ENCODE measurements at regions of chr2 and their contacts with region 1.

Region 1: GRCh38 chr2:48356701-48357325 is 173.1 kb upstream of the STON1 start:
- DNase-seq: peak; percentile 25
- H3K4me3 Mint-ChIP-seq: peak overlapping the region; percentile 74
- H3K27ac Mint-ChIP-seq: peak overlapping the region; percentile 98
- H3K4me1 Mint-ChIP-seq: peaks cover 53% of the 10 kb centered on the region
- H3K27me3 Mint-ChIP-seq: no peaks in the 10 kb centered on the region

Region 2: DNA sequence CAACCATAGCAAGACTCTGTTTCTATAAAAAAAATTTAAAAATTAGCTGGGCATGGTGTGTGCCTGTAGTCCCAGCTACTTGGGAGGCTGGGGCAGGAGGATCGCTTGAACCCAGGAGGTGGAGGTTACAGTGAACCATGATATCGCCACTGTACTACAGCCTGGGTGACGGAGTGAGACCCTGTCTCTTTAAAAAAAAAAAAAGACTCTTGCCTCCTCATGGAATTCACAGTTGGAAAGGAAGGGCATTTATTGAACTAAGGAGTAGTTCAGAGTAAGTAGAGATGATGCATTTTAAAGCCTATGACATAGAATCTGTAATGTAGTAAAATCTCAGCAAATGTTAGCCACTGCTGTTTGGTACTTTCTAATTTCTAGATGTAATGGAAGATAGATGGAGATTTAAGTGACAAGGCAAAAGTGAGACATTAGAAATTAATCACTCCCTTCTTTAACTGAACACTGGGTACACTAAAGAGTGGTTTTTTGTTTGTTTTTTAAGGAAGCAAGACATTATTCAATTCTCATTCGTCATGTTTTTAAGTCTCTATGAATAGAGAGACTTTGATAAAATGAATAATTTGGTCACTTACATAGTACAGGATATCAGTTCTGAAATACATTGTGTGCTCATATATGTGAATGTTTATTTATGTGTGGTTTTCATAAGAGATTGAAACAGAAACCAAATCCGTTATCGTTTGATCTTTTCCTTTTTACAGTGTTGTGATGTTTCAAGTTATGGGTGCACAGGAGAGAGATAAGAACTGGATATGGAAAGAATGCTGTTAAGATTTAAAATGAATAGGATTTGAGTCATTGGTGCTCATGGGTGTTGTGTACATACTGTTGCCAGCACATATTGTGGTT is 13.0 kb before region 1 on chr2:
- intact Hi-C with region 1: loop called (anchors 1 kb)
- DNase-seq: peak; percentile 16
- H3K4me3 Mint-ChIP-seq: peak overlapping the region; percentile 1
- H3K27ac Mint-ChIP-seq: peak overlapping the region; percentile 61
- H3K4me1 Mint-ChIP-seq: peaks cover 49% of the 10 kb centered on the region
- H3K27me3 Mint-ChIP-seq: no peaks in the 10 kb centered on the region

Measured in activated T-helper 2 cell treated with anti-CD3 and anti-CD28 coated beads, Interferon-gamma antibody, Interleukin-2, Interleukin-4, amounts not matched to agents 10 μg/mL and 5 μg/mL and 100 μg/mL, durations not matched to agents 14 hours and 24 hours and 36 hours (primary cell).